ENCODE measurements at regions of chr5 and their contacts with region 1.

Region 1: DNA sequence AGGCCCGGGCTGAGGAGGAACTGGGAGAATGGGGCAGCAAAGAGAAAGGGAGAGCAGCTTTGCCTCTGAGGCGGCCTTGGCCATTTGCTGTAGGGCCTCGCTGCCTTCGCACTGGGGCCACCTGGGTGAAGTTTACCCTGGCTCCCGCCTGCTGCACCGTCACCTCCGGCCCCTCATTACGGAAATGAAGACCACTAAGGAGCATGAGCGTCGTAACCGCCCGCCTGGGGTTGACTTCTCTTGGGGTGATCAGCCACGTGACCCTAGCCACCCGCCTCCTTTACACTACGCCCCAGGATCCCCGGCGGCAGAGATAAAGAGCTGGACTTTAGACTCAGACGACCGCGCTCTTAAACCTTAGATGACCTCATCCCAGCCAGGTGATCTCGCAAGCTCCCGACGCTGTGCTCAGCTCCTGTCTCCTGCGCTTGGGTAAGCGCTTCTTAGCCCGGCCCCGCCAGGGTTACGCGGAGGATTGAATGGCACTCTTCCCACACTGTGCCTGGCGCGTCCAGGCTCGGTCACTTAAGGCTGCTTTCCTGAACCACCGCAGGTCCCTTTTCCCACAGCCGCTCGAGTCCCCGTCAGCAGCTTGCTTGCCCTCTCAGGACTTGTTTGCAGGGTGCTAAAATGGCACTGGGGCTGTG is 107.9 kb upstream of the LARP1 start:
- DNase-seq: peak; percentile 85
- H3K4me3 ChIP-seq: peak overlapping the region; percentile 12
- H3K27ac ChIP-seq: no peak overlapping the region
- H3K4me1 ChIP-seq: no peaks in the 10 kb centered on the region
- H3K27me3 ChIP-seq: no peaks in the 10 kb centered on the region
- CTCF ChIP-seq: no peak

Region 2: DNA sequence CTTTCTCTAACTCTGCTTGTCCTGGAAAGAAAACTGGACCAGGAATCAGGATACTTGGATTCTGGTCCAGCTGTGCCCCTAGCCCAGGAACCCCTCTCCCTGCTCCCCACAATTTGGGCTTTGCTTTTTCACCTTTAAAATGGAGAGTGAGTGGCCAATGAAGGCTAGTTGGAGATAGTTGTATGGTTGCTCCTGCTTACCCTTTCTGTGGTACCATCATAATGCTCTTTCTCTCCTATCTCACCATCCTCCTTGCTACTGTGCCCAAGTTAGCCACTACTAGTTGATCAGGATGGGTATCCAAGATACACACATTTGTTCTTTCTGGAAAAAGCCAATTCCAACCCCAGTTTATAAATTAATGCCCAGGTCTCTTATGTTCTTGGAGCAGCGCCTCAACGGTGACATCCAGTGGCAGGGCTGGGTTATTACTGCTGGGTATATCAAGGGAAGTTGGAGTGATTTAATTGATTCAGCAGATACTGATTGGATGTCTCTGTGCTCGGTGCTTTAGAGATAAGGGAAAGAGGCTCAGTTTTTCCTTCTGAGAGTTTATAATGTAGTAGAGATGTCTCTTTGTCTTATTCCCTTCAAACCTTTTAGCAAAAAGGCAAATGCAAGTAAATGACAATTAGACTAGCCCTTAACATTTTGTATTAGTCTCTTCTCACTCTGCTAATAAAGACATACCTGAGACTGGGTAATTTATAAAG is 164.6 kb after region 1 on chr5:
- intact Hi-C with region 1: loop called (anchors 2 kb)
- DNase-seq: peak; percentile 59
- H3K4me3 ChIP-seq: no peak overlapping the region
- H3K27ac ChIP-seq: no peak overlapping the region
- H3K4me1 ChIP-seq: no peaks in the 10 kb centered on the region
- H3K27me3 ChIP-seq: no peaks in the 10 kb centered on the region
- CTCF ChIP-seq: peak; percentile 86

Region 3: GRCh38 chr5:154940772-154941620 is 293.8 kb after region 1 on chr5 and contains the start of gene MRPL22:
- intact Hi-C with region 1: loop called (anchors 10 kb)
- DNase-seq: peak; percentile 95
- H3K4me3 ChIP-seq: peak within 1 kb of the TSS; percentile 86
- H3K27ac ChIP-seq: peak within 1 kb of the TSS; percentile 71
- H3K4me1 ChIP-seq: peaks cover 6% of the 10 kb centered on the region
- H3K27me3 ChIP-seq: no peaks in the 10 kb centered on the region
- CTCF ChIP-seq: no peak
- total RNA-seq, gene MRPL22: 51.4 to 62.3 TPM

Measured in colonic mucosa (tissue), 4 donors.